MCF 10A (cell line): ENCODE measurements at regions of chr1 and their contacts with region 1.

Region 1: DNA sequence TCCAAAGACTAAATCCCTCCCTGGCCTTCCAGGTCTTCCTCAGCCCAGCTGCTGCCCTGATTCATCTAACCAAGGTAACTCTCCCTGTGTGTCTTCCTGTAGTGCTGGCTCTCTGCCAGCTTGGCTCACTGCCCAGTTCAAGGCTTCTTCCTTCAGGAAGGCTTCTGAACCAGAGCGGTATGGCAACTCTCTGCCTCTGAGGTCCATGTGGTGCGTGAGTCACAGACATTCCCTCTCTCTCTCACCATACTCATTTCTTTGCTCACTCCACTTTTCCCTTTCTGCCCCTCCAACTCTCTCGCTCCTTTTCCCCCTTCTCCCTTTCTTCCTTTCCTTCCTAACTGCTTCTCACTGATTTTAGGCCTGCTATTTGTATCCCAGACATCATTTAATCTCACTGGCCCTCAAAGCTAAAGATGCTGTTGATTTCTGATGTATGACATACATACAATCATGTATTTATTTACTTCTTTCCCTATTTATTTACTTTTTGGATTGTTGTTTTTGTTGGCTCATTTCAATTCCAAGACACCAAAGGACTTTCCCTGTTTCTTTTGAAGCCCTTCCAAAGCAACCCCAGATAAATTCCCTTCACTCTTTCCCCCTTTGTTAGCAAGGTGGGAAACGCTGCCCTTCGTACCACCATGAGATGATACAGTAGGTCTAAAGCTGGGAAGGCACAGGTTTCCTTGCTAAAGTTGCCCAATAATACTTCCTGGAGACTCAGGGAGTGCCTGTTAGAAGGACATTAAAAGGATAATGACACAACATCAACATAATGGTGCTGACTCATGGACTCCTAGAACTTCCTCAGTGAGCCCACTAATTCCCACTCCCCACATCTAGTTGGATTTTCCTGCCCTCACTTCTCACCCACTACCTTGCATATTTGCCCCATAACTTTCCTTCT is 17.8 kb downstream of the CFAP45 start:
- DNase-seq: peak; percentile 100
- H3K4me3 Mint-ChIP-seq: no peak overlapping the region
- H3K27ac Mint-ChIP-seq: no peak overlapping the region
- H3K4me1 Mint-ChIP-seq: peaks cover 14% of the 10 kb centered on the region
- H3K27me3 Mint-ChIP-seq: no peaks in the 10 kb centered on the region
- CTCF ChIP-seq: no peak

Region 2: GRCh38 chr1:159854693-159855192 is 27.4 kb before region 1 on chr1:
- CTCF ChIA-PET with region 1: interaction called, 98 read pairs
- POLR2A ChIA-PET with region 1: interaction called, 53 read pairs
- intact Hi-C with region 1: loop called (anchors 1 kb)
- DNase-seq: peak; percentile 88
- H3K4me3 Mint-ChIP-seq: peak overlapping the region; percentile 77
- H3K27ac Mint-ChIP-seq: peak overlapping the region; percentile 61
- H3K4me1 Mint-ChIP-seq: peaks cover 29% of the 10 kb centered on the region
- H3K27me3 Mint-ChIP-seq: no peaks in the 10 kb centered on the region
- CTCF ChIP-seq: no peak

Region 3: GRCh38 chr1:159869173-159869572 is 13.0 kb before region 1 on chr1:
- CTCF ChIA-PET with region 1: interaction called, 146 read pairs
- POLR2A ChIA-PET with region 1: interaction called, 82 read pairs
- intact Hi-C with region 1: no loop called
- DNase-seq: peak; percentile 84
- H3K4me3 Mint-ChIP-seq: peak overlapping the region; percentile 22
- H3K27ac Mint-ChIP-seq: peak overlapping the region; percentile 85
- H3K4me1 Mint-ChIP-seq: peaks cover 51% of the 10 kb centered on the region
- H3K27me3 Mint-ChIP-seq: no peaks in the 10 kb centered on the region
- CTCF ChIP-seq: no peak

Region 4: GRCh38 chr1:159959451-159959850 is 77.3 kb after region 1 on chr1:
- CTCF ChIA-PET with region 1: no interaction called
- POLR2A ChIA-PET with region 1: no interaction called
- intact Hi-C with region 1: no loop called
- DNase-seq: no peak
- H3K4me3 Mint-ChIP-seq: no peak overlapping the region
- H3K27ac Mint-ChIP-seq: peak overlapping the region; percentile 7
- H3K4me1 Mint-ChIP-seq: peaks cover 44% of the 10 kb centered on the region
- H3K27me3 Mint-ChIP-seq: no peaks in the 10 kb centered on the region
- CTCF ChIP-seq: no peak